Gastrocnemius medialis (tissue), 4 donors: ENCODE measurements at regions of chr6 and their contacts with region 1.

Region 1: DNA sequence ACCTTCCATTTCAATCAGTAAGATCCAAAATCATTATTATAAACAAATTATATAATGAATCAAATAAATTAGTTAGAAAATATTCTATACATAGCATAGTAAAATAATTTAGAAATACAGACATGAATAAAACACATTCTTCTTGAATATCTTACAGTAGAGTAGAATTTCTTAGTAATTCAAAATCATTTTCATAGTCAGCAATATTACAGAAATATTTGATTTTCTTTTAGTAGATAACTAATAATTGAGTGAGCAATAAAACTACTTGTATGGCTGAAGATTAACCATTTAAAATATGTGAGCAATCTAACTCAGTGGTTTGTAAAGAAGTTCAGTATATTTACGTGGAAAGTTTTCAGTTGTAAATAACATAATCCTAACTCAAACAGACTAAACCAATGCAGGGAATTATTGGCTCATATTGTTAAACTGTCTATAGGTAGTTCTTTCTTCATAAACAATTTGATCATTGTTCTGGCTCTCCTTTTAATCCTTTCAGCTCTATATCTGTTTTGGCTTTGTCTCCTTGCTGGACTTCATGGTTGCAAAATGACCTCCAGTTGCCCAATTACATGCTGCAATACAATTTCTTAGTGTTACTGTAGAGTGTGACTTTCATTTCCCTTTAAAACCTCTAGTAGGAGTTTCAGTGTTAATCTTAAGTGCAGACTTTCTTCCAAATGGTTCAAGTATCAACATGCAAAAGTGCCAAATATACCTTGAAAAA is 307.5 kb downstream of the EYS start:
- DNase-seq: no peak
- ATAC-seq: no peak
- H3K4me3 ChIP-seq: no peak overlapping the region
- H3K27ac ChIP-seq: no peak overlapping the region
- H3K4me1 ChIP-seq: no peaks in the 10 kb centered on the region
- H3K27me3 ChIP-seq: no peaks in the 10 kb centered on the region
- CTCF ChIP-seq: no peak
- POLR2A ChIP-seq: no peak

Region 2: DNA sequence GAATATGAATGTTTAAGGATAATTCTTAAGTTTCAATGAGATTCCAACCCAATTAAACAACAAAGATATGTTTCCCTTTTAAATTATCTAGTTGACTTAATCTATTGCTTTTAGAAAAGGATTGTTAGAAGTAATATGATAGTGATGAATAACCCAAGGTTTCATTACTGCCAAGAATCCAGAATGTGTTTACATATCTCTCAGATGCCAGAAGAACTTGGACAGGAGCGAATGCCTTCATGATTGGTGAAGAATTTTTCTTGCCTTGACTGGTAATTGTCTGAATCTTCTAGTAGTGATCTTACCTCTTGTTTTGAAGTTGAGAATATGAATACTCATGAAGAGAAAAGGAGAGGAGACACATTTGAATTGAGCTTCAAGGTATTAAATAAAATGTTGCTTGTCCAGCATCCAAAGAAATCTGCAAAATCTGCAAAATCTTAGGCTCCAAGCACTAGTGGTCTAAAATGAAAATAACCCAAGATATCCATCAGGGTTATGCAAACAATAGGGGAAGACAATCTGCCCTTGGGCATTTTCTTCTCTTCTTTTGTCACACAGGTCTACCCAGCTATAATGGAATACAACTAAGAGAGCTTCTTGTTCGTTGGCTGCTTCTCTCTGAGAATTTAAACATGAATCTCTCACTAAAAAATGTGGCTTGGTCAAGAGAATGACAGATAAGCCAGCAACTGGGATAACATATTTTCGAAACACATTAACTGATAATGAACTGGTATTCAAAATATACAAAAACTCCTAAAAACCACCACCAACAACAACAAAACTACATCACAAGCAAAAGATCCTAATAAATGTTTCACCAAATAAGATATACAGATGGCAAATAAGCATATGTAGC is 621.4 kb before region 1 on chr6:
- in situ Hi-C with region 1: no loop called
- intact Hi-C with region 1: no loop called
- DNase-seq: no peak
- ATAC-seq: no peak
- H3K4me3 ChIP-seq: no peak overlapping the region
- H3K27ac ChIP-seq: no peak overlapping the region
- H3K4me1 ChIP-seq: no peaks in the 10 kb centered on the region
- H3K27me3 ChIP-seq: no peaks in the 10 kb centered on the region
- CTCF ChIP-seq: no peak
- POLR2A ChIP-seq: no peak

Region 3: GRCh38 chr6:65416621-65417020 is 17.1 kb after region 1 on chr6:
- in situ Hi-C with region 1: no loop called
- intact Hi-C with region 1: loop called (anchors 1 kb)
- DNase-seq: no peak
- ATAC-seq: no peak
- H3K4me3 ChIP-seq: no peak overlapping the region
- H3K27ac ChIP-seq: no peak overlapping the region
- H3K4me1 ChIP-seq: no peaks in the 10 kb centered on the region
- H3K27me3 ChIP-seq: no peaks in the 10 kb centered on the region
- CTCF ChIP-seq: no peak
- POLR2A ChIP-seq: no peak